Activated naive CD4-positive, alpha-beta T cell treated with anti-CD3 and anti-CD28 coated beads for 36 hours (primary cell): ENCODE measurements at regions of chr3 and their contacts with region 1.

Region 1: GRCh38 chr3:175941356-175941755 is 1082.2 kb downstream of the NAALADL2 start:
- DNase-seq: peak; percentile 7
- H3K4me3 Mint-ChIP-seq: no peak overlapping the region
- H3K27ac Mint-ChIP-seq: no peak overlapping the region
- H3K4me1 Mint-ChIP-seq: no peaks in the 10 kb centered on the region
- H3K27me3 Mint-ChIP-seq: no peaks in the 10 kb centered on the region

Region 2: GRCh38 chr3:174397848-174398247 is 1543.5 kb before region 1 on chr3:
- CTCF ChIA-PET with region 1: no interaction called
- intact Hi-C with region 1: loop called (anchors 5 kb)
- DNase-seq: no peak
- H3K4me3 Mint-ChIP-seq: no peak overlapping the region
- H3K27ac Mint-ChIP-seq: no peak overlapping the region
- H3K4me1 Mint-ChIP-seq: no peaks in the 10 kb centered on the region
- H3K27me3 Mint-ChIP-seq: no peaks in the 10 kb centered on the region